ENCODE measurements at regions of chr7 and their contacts with region 1.

Region 1: DNA sequence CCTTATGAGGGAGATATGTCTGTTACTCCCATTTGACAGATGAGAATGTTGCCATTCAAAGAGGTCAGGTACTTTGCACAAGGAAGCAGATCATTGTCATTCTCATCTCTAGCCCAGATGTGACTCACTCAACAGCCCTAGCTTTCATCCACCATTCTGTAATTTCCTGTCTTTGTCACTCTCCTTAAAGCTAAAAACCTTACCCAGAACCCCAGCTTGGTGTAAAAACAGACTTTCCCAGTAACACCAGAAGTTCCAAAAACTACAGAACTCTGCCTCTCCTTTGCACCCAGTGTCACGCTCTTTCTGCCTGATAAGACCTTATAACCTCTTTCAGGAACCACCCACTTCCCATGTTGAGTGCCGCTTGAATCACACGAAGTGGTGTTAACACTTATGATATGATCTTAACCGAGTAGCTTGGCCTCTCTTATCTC is 89.1 kb upstream of the SP4 start:
- DNase-seq: peak; percentile 73
- H3K4me3 Mint-ChIP-seq: peak overlapping the region; percentile 23
- H3K27ac Mint-ChIP-seq: peak overlapping the region; percentile 87
- H3K4me1 Mint-ChIP-seq: peaks cover 55% of the 10 kb centered on the region
- H3K27me3 Mint-ChIP-seq: no peaks in the 10 kb centered on the region

Region 2: DNA sequence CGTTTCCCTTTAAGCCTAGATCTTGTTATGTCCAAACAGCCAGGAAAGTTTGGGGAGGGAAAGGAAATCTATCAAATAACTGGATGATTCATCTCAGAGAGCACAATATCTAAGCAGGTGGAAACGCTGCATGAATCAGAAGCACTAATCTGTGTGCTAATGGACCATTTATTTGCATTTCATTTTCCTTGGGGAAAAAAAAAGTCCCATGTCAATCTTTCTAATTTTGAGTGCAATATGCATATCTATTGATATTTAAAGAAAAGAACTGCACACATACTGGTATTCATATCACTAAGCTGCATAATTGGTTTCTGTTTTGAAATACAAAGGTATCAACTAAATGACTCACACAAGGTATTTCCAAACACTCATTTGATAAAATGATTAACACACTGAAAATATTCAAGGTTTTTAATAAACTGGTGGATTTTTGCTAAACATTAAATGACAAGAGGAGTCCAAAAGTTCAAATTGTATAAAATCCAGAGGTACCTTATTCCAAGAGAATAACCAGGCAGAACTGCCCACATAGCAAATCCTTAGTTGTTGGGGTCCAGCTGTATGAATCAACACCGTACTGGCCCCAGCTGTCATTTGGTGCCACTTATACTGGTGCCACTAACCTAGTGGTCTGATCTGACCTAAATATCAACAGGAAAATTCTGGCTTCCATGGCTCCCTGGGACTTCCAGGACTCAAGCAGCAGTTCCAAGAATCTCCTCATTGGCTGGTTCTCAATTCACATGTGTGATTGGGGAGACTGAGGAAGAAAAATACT is 33.1 kb before region 1 on chr7:
- intact Hi-C with region 1: loop called (anchors 2 kb)
- DNase-seq: no peak
- H3K4me3 Mint-ChIP-seq: no peak overlapping the region
- H3K27ac Mint-ChIP-seq: no peak overlapping the region
- H3K4me1 Mint-ChIP-seq: peaks cover 20% of the 10 kb centered on the region
- H3K27me3 Mint-ChIP-seq: no peaks in the 10 kb centered on the region

Region 3: GRCh38 chr7:21365866-21366624 is 27.3 kb after region 1 on chr7:
- intact Hi-C with region 1: loop called (anchors 1 kb)
- DNase-seq: no peak
- H3K4me3 Mint-ChIP-seq: no peak overlapping the region
- H3K27ac Mint-ChIP-seq: peak overlapping the region; percentile 25
- H3K4me1 Mint-ChIP-seq: peaks cover 56% of the 10 kb centered on the region
- H3K27me3 Mint-ChIP-seq: no peaks in the 10 kb centered on the region

Region 4: DNA sequence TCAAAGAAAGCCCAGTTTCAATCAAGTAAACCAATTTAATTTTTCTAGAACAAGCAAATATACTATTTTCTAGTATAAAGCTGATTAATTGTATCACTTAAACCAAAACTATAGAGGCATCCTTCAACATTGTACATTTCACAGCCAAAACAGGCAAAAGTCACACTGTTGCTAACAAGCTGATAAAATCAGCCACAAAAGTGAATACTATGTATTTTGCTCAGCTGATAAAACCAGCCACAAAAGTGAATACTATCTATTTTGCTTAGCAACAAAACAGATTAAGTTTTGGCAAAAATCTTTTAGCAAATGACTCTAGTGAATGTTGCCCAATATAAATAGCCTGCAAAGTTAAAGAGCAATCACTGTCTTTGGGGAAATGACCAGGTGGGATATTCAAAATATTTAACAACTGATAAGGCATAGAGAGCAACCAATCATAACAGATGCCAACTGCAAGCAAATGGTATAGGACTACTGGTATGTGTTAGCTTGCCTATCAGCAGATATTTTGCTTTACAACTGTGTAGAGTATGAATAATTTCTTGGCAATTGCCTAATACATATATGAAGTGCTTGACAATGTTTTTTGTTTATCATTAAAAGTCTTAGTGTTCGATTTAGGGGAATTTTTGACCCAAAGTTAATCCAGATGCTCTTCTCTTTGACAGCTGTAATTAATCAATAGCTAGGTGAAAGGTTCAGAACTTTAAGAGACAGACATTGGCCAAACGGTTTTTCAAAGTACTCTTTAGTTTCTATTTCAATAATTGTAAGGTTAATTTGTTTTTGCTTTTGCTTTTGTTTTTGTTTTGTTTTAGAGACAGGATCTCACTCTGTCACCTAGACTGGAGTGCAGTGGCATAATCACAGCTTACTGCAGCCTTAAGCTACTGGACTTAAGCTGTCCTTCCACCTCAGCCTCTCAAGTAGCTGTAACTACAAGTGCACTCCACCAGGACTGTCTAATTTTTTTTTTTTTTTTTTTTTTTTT is 44.8 kb after region 1 on chr7:
- intact Hi-C with region 1: loop called (anchors 1 kb)
- DNase-seq: no peak
- H3K4me3 Mint-ChIP-seq: peak overlapping the region; percentile 51
- H3K27ac Mint-ChIP-seq: peak overlapping the region; percentile 64
- H3K4me1 Mint-ChIP-seq: peaks cover 35% of the 10 kb centered on the region
- H3K27me3 Mint-ChIP-seq: peaks cover 2% of the 10 kb centered on the region

Region 5: GRCh38 chr7:21526007-21526406 is 187.3 kb after region 1 on chr7:
- intact Hi-C with region 1: loop called (anchors 10 kb)
- DNase-seq: no peak
- H3K4me3 Mint-ChIP-seq: no peak overlapping the region
- H3K27ac Mint-ChIP-seq: no peak overlapping the region
- H3K4me1 Mint-ChIP-seq: peaks cover under 1% of the 10 kb centered on the region
- H3K27me3 Mint-ChIP-seq: peaks cover 22% of the 10 kb centered on the region

Region 6: GRCh38 chr7:21656796-21657195 is 318.1 kb after region 1 on chr7:
- intact Hi-C with region 1: no loop called
- DNase-seq: no peak
- H3K4me3 Mint-ChIP-seq: no peak overlapping the region
- H3K27ac Mint-ChIP-seq: no peak overlapping the region
- H3K4me1 Mint-ChIP-seq: no peaks in the 10 kb centered on the region
- H3K27me3 Mint-ChIP-seq: no peaks in the 10 kb centered on the region

Measured in activated T-helper 2 cell treated with anti-CD3 and anti-CD28 coated beads, Interferon-gamma antibody, Interleukin-2, Interleukin-4, amounts not matched to agents 10 μg/mL and 5 μg/mL and 100 μg/mL, durations not matched to agents 14 hours and 24 hours and 36 hours (primary cell).